CD4-positive, alpha-beta T cell (primary cell): ENCODE measurements at regions of chr2 and their contacts with region 1.

Region 1: DNA sequence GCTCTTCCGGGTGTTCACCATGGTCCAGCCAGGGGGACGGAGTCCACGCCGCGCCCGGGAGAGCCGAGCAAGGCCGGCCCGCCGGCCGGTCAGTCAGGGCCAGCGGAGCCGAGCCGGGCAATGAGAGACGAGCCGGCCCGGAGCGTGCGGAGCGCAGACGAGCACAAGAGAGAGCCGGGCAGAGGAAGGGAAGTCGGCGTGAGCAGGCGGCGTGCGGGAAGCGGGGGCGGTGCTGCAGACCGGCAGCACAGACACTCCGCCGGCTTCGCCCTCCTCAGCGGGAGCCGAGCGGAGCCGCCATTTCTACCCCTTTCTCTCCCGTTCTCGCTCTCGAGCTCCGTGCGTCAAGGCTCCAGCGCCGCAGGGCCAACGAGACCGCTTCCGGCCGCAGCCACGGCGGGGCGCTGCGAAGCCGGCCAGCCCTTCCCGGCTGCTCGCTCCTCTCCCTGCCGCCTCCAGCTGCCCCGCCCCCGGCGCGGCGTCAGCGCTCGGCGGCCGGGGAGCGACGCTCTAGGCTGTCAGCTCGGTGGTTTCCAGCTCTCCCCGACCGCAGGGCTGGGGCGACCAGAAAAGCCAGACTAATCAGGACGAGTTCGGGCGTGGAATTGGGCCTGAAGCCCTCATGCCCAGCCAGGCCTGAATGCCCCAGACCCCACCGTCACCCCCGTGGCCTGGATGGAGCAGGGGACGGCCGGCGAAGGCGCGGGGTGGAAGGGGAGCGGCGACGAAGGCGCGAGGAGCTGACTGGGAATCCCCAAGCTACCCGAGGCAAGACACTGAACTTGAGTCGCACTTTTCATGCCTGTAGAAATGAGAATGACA is at the start of gene ATAD2B:
- DNase-seq: peak; percentile 87 to 99 (median 93)
- ATAC-seq: peak; percentile 80
- H3K4me3 ChIP-seq: peak within 1 kb of the TSS; percentile 91
- H3K4me3 Mint-ChIP-seq: peak within 1 kb of the TSS; percentile 98
- H3K27ac ChIP-seq: peak within 1 kb of the TSS; percentile 98 to 99
- H3K27ac Mint-ChIP-seq: peak within 1 kb of the TSS; percentile 98
- H3K4me1 ChIP-seq: peaks cover 28% of the 10 kb centered on the region
- H3K4me1 Mint-ChIP-seq: peaks cover 55% of the 10 kb centered on the region
- H3K27me3 ChIP-seq: no peaks in the 10 kb centered on the region
- H3K27me3 Mint-ChIP-seq: no peaks in the 10 kb centered on the region
- CTCF ChIP-seq: peak; percentile 74
- total RNA-seq, gene ATAD2B: 30.7 to 35.4 TPM

Region 2: DNA sequence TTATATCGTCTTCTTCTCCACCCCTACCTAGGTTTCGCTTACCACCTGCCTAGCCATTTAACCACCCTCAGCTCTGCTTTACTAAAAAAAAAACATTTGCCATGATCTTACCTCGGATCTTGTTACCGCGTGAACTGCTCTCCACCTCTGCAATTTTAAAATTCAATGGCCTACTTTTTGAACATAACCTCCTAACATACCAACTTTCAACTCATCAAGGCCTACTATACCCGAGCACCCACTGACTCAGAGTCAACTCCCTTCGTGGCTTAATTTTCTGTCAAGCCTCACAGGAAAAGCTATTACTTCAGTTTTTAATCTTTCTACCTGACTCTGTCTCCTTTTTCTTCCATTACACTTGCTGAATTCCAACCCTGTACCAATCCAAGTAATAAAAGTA is 55.8 kb before region 1 on chr2:
- CTCF ChIA-PET with region 1: interaction called, 4 read pairs
- POLR2A ChIA-PET with region 1: interaction called, 6 read pairs
- intact Hi-C with region 1: loop called in 1 of 2 experiments (anchors 10 kb)
- DNase-seq: no peak
- ATAC-seq: no peak
- H3K4me3 ChIP-seq: no peak overlapping the region
- H3K4me3 Mint-ChIP-seq: no peak overlapping the region
- H3K27ac ChIP-seq: no peak overlapping the region
- H3K27ac Mint-ChIP-seq: no peak overlapping the region
- H3K4me1 ChIP-seq: no peaks in the 10 kb centered on the region
- H3K4me1 Mint-ChIP-seq: no peaks in the 10 kb centered on the region
- H3K27me3 ChIP-seq: no peaks in the 10 kb centered on the region
- H3K27me3 Mint-ChIP-seq: no peaks in the 10 kb centered on the region
- CTCF ChIP-seq: no peak

Region 3: DNA sequence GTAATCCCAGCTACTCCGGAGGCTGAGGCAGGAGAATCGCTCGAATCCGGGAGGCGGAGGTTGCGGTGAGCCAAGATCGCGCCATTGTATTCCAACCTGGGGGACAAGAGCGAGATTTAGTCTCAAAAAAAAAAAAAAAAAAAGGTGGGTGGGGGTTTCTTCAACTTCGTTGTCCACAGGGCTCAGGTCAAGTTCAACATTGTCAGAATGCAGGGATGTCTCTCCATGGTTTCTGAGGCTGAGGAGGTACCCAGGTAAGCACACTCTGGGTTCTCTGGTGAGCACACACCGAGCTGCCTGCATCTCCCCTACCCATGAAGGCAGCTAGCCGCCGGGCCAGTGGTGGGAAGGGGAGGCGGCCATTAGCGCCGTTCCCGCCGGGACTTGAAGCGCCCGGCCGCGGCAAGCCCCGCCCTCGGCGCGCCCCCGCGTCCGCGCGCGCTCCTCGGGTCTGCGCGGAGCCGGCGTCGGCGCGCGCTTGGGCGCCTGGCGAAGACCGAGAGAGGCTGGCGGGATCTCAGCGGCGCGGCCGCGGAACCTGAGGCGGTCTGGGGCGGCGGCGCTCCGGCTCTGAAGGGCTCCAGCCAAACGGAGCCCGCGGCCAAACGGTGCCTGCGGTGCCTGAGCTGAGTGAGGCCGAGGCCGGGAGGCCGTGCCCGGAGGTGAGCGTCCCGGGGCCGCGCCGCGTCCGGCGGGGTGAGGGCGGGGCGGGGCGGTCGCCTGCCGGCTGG is 13.2 kb after region 1 on chr2 and contains the start of gene UBXN2A:
- CTCF ChIA-PET with region 1: interaction called, 36 read pairs
- POLR2A ChIA-PET with region 1: interaction called, 117 read pairs
- intact Hi-C with region 1: loop called (anchors 1 kb)
- DNase-seq: peak; percentile 54 to 93 (median 66)
- ATAC-seq: peak; percentile 86
- H3K4me3 ChIP-seq: peak within 1 kb of the TSS; percentile 88
- H3K4me3 Mint-ChIP-seq: peak within 1 kb of the TSS; percentile 94
- H3K27ac ChIP-seq: peak within 1 kb of the TSS in 1 of 2 donors; percentile 15
- H3K27ac Mint-ChIP-seq: peak within 1 kb of the TSS; percentile 76
- H3K4me1 ChIP-seq: peaks cover 19% of the 10 kb centered on the region
- H3K4me1 Mint-ChIP-seq: peaks cover 30% of the 10 kb centered on the region
- H3K27me3 ChIP-seq: no peaks in the 10 kb centered on the region
- H3K27me3 Mint-ChIP-seq: no peaks in the 10 kb centered on the region
- CTCF ChIP-seq: no peak
- total RNA-seq, gene UBXN2A: 12.9 to 16.7 TPM

Region 4: DNA sequence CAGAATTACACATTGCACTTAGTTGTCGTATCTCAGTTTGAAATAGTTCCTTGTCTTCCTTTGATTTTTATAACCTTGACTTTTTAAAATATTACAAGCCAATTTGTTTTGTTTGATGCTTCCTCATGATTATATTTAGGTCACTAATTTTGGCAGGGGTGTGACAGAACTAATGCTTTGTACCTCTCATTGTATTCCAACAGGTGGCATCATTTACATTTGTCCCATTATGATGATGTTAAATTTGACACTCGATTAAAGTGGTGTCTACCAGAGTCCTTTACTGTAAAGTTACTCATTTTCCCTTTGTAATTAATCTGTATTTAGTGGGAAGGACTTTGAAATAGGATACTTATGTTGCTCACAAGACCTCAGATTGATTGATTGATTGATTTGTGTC is 61.4 kb after region 1 on chr2:
- CTCF ChIA-PET with region 1: interaction called, 3 read pairs
- POLR2A ChIA-PET with region 1: interaction called, 10 read pairs
- intact Hi-C with region 1: no loop called
- DNase-seq: peak in 3 of 14 experiments; percentile 40 to 44 (median 43)
- ATAC-seq: peak; percentile 66
- H3K4me3 ChIP-seq: no peak overlapping the region
- H3K4me3 Mint-ChIP-seq: no peak overlapping the region
- H3K27ac ChIP-seq: no peak overlapping the region
- H3K27ac Mint-ChIP-seq: no peak overlapping the region
- H3K4me1 ChIP-seq: no peaks in the 10 kb centered on the region
- H3K4me1 Mint-ChIP-seq: no peaks in the 10 kb centered on the region
- H3K27me3 ChIP-seq: no peaks in the 10 kb centered on the region
- H3K27me3 Mint-ChIP-seq: no peaks in the 10 kb centered on the region
- CTCF ChIP-seq: peak; percentile 39

Region 5: DNA sequence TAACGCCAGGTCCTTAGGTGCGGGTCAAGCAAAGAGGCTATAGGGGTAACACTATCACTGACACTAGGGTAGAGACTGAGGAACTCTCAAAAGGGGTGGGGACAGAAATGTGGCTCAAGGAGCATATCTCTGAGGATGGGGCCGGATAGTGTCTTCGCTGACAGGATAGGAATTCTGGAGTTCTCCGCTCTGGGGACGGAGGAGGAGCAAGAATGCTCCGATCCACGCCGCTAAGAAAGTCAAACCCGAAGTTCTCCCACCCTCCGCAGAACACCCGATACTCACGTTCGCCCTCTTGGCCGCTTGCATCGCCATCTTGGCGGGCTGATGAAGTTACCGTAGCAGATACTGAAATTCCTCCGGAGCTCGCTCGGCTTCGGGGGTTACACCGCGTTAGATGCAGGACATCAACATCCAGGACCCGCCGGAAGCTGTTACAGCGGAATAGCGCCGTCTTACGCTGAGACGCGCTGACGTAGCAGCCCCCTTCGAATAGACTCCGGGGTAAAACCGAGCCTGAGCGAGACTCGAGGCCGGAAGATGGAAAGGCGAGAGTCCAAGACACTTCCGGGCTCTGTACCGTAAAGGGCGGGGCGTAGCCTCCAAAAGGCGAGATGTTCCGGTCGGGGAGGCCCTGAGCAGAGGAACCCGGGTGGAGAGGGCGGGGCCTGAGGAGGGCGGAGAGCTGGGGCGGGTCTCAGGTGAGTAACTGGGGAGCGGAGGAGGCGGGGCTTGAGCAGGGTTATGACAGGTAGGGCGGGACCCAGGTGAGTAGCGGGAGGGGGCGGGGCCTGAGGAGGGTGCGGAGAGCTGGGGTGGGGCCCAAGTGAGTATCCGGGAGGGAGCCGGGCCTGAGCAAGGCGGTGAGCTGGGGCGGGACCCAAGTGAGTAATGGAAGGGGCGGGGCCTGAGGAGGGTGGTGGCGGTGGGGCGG is 149.2 kb after region 1 on chr2 and contains the start of gene SF3B6:
- CTCF ChIA-PET with region 1: interaction called, 23 read pairs
- POLR2A ChIA-PET with region 1: interaction called, 132 read pairs
- intact Hi-C with region 1: loop called (anchors 1 to 2 kb)
- DNase-seq: peak; percentile 98 to 100 (median 100)
- ATAC-seq: peak; percentile 81
- H3K4me3 ChIP-seq: peak within 1 kb of the TSS; percentile 93
- H3K4me3 Mint-ChIP-seq: peak within 1 kb of the TSS; percentile 97
- H3K27ac ChIP-seq: peak within 1 kb of the TSS; percentile 86 to 95
- H3K27ac Mint-ChIP-seq: peak within 1 kb of the TSS; percentile 98
- H3K4me1 ChIP-seq: peaks cover 27% of the 10 kb centered on the region
- H3K4me1 Mint-ChIP-seq: peaks cover 41% of the 10 kb centered on the region
- H3K27me3 ChIP-seq: no peaks in the 10 kb centered on the region
- H3K27me3 Mint-ChIP-seq: no peaks in the 10 kb centered on the region
- CTCF ChIP-seq: no peak
- total RNA-seq, gene SF3B6: 59.8 to 62.6 TPM

Region 6: GRCh38 chr2:24360050-24360962 is 433.3 kb after region 1 on chr2 and contains the start of gene ITSN2:
- CTCF ChIA-PET with region 1: no interaction called
- POLR2A ChIA-PET with region 1: interaction called, 14 read pairs
- intact Hi-C with region 1: no loop called
- DNase-seq: peak; percentile 65 to 94 (median 75)
- ATAC-seq: peak; percentile 81
- H3K4me3 ChIP-seq: peak within 1 kb of the TSS; percentile 83
- H3K4me3 Mint-ChIP-seq: peak within 1 kb of the TSS; percentile 99
- H3K27ac ChIP-seq: peak within 1 kb of the TSS; percentile 83 to 93
- H3K27ac Mint-ChIP-seq: peak within 1 kb of the TSS; percentile 97
- H3K4me1 ChIP-seq: peaks cover 13% of the 10 kb centered on the region
- H3K4me1 Mint-ChIP-seq: peaks cover 40% of the 10 kb centered on the region
- H3K27me3 ChIP-seq: no peaks in the 10 kb centered on the region
- H3K27me3 Mint-ChIP-seq: no peaks in the 10 kb centered on the region
- CTCF ChIP-seq: no peak
- total RNA-seq, gene ITSN2: 75.4 to 77.1 TPM